ENCODE measurements at regions of chr15 and their contacts with region 1.

Region 1: DNA sequence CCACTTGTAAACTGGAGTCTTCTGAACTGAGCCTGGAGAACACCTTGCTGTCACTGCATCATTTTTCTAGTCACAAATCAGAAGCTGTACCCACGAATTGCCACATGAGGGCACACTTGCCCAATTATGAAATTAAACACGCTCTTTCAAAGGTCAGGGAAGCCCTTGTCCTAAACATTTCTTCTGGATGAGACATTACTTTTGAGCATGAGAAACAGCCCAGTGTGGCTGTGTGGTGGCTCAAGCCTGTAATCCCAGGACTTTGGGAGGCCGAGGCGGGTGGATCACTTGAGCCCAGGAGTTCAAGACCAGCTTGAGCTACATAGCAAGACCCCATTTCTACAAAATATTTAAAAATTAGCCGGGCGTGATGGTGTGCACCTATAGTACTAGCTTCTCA is 27.5 kb upstream of the CFAP161 start:
- DNase-seq: no peak
- ATAC-seq: peak; percentile 73

Region 2: GRCh38 chr15:81000624-81001151 is 105.9 kb before region 1 on chr15 and contains the start of gene TLNRD1:
- intact Hi-C with region 1: loop called (anchors 10 kb)
- DNase-seq: peak; percentile 90
- ATAC-seq: peak; percentile 85
- total RNA-seq, gene TLNRD1: 6.4 TPM

Region 3: GRCh38 chr15:81163961-81164800 is 57.6 kb after region 1 on chr15:
- intact Hi-C with region 1: no loop called
- DNase-seq: no peak
- ATAC-seq: no peak

Region 4: DNA sequence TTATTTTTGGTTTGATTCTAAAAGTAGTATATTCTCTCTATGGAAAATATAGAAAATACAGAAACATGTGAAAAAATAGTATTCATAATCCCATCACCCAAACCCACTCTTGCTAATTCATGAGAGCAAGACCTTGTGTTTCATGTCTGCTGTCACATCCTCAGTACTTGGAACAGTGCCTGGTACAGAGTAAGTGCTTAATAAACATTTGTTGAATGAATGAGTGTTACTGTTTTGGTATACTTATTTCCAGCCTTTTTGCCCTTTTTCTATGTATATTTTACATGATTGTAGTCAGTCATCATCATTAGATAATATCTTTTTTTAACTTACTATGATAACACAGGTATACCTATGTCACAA is 149.4 kb after region 1 on chr15:
- intact Hi-C with region 1: no loop called
- DNase-seq: no peak
- ATAC-seq: no peak

Region 5: DNA sequence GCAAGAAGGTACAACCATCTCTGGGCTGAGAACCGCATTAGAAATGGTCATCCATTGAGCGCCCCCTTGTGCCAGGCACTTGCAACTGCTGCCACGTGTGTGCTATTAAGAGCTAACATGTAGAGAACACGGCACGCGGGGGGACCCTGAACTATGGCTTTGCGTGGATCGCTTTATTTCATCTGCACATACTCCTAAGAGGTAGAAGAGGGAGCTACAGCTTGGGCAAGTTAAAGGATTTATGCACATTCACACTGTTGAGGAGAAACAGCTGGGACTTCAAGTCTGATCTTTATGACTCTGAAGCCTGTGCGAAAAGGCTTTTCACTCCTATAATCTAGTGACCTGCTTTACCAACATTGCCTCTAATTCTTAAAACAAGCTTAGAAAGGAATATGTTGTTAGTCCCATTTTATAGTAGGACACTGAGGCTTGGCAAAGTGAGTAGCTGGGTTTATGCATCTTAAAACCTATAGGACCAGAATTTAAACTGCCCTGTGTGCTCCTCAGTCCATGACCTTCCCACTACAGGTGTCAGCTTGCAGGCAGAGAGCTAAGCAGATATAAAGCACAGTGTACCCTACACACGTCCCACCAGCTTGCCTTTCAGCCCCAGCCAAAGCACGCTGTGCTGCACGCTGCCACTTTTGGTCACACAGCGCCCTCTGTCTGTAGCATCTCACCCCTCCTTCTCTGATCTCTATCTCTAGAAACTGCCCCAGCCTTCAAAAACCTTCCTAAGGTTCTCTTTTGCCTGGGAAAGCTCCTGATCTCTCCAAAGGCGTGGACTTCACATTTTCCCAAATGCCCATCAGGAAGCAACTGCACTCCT is 159.6 kb after region 1 on chr15:
- intact Hi-C with region 1: loop called (anchors 5 kb)
- DNase-seq: peak; percentile 81
- ATAC-seq: peak; percentile 94

Measured in left ventricle myocardium superior (tissue), 1 donor.